ENCODE measurements at regions of chr5 and their contacts with region 1.

Region 1: DNA sequence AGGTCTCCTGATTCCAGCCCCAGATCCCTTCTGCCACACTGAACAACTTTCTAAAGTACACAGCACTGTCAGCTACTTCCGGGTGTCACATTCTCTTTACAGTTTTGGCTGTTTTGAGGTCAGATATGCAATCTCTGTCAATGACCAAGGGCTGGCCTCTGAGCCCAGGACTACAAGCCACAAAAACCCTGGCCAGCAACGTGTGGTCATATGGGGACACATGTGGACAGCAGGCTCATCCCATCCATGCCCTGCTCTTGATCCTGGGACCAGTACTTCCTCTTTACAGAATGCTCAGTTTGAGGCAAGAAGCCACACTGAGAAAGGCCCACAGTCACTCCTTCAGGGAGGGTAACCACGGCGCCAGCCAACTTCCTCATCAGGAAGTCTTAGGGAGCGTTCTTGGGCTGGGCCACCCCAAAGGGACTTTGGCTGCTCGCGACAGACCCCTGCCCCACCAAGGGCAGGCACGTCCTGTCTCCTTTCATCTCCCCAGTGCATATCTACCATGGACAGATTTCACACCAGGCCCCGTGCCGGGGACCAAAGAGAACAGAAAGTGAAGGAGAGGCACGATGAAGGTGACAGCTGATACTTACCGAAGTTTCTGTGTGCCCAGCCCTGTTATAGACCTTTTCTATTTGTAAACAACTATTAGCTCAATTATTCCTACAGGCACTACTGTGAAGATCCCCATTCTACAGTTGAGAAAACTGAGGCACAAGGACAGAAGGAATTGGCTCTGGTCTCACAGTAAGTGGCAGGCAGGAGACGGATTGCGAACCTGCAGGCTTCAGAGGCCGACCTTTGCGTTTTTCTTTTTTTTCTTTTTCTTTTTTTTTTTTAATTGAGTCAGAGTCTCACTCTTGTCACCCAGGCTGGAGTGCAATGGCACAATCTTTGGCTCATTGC is 37.3 kb downstream of the STK10 start:
- H3K4me3 Mint-ChIP-seq: peak overlapping the region; percentile 58
- H3K27ac Mint-ChIP-seq: peak overlapping the region; percentile 90
- H3K4me1 Mint-ChIP-seq: peaks cover 81% of the 10 kb centered on the region
- H3K27me3 Mint-ChIP-seq: no peaks in the 10 kb centered on the region

Region 2: GRCh38 chr5:172106511-172107356 is 44.0 kb before region 1 on chr5:
- intact Hi-C with region 1: loop called (anchors 5 kb)
- H3K4me3 Mint-ChIP-seq: no peak overlapping the region
- H3K27ac Mint-ChIP-seq: no peak overlapping the region
- H3K4me1 Mint-ChIP-seq: peaks cover 72% of the 10 kb centered on the region
- H3K27me3 Mint-ChIP-seq: no peaks in the 10 kb centered on the region

Region 3: DNA sequence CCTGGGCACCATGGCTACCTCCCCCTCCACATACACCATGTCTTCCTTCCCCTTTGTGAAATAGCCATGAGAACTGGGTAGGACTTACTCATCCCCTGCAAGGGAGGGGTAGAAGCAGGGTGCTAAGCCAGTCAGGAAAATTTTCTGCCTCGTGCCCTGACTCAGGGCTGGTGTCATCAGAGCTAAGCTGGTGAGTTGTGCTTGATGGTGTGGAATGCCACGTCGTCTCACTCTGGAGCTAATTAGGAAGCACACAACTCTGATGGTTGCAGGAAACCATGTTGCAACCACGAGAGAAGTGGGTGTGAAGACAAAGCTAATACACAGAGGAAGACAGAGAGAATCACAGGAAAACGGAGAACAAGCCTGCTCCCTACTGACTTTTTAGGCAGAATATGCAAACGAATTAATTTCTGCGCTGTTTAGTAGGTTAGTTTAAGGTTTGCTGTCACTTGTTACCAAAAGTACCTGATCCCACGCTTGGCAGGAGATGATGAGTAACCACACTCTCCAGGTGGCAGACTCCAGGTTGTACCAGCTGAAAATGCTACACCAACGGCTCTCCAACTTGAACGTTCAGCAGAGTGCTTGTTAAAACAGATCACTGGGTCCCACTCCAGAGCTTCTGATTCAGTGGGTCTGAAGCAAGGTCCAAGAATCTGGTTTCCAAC is 17.3 kb before region 1 on chr5:
- intact Hi-C with region 1: loop called (anchors 1 kb)
- H3K4me3 Mint-ChIP-seq: no peak overlapping the region
- H3K27ac Mint-ChIP-seq: peak overlapping the region; percentile 98
- H3K4me1 Mint-ChIP-seq: peaks cover 70% of the 10 kb centered on the region
- H3K27me3 Mint-ChIP-seq: no peaks in the 10 kb centered on the region